Caco-2 (cell line): ENCODE measurements at regions of chr2 and their contacts with region 1.

Region 1: DNA sequence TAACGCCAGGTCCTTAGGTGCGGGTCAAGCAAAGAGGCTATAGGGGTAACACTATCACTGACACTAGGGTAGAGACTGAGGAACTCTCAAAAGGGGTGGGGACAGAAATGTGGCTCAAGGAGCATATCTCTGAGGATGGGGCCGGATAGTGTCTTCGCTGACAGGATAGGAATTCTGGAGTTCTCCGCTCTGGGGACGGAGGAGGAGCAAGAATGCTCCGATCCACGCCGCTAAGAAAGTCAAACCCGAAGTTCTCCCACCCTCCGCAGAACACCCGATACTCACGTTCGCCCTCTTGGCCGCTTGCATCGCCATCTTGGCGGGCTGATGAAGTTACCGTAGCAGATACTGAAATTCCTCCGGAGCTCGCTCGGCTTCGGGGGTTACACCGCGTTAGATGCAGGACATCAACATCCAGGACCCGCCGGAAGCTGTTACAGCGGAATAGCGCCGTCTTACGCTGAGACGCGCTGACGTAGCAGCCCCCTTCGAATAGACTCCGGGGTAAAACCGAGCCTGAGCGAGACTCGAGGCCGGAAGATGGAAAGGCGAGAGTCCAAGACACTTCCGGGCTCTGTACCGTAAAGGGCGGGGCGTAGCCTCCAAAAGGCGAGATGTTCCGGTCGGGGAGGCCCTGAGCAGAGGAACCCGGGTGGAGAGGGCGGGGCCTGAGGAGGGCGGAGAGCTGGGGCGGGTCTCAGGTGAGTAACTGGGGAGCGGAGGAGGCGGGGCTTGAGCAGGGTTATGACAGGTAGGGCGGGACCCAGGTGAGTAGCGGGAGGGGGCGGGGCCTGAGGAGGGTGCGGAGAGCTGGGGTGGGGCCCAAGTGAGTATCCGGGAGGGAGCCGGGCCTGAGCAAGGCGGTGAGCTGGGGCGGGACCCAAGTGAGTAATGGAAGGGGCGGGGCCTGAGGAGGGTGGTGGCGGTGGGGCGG is at the start of gene SF3B6:
- DNase-seq: peak; percentile 100
- H3K4me3 ChIP-seq: peak within 1 kb of the TSS; percentile 72
- H3K4me3 Mint-ChIP-seq: peak within 1 kb of the TSS; percentile 99
- H3K27ac Mint-ChIP-seq: peak within 1 kb of the TSS; percentile 96
- H3K4me1 ChIP-seq: peaks cover 17% of the 10 kb centered on the region
- H3K4me1 Mint-ChIP-seq: peaks cover 22% of the 10 kb centered on the region
- H3K27me3 ChIP-seq: no peaks in the 10 kb centered on the region
- H3K27me3 Mint-ChIP-seq: no peaks in the 10 kb centered on the region
- CTCF ChIP-seq: no peak
- total RNA-seq, gene SF3B6: 183 and 184 TPM in 2 replicates

Region 2: GRCh38 chr2:23926750-23927571 is 149.2 kb before region 1 on chr2 and contains the start of gene ATAD2B:
- CTCF ChIA-PET with region 1: interaction called, 30 read pairs
- POLR2A ChIA-PET with region 1: interaction called, 34 read pairs
- intact Hi-C with region 1: loop called (anchors 2 kb)
- DNase-seq: peak; percentile 91 to 99
- H3K4me3 ChIP-seq: peak within 1 kb of the TSS; percentile 99
- H3K4me3 Mint-ChIP-seq: peak within 1 kb of the TSS; percentile 91
- H3K27ac Mint-ChIP-seq: peak within 1 kb of the TSS; percentile 94
- H3K4me1 ChIP-seq: 0 out of 2 replicates have a peak, but pooled peaks cover 3% of the 10 kb centered on the region
- H3K4me1 Mint-ChIP-seq: peaks cover 25% of the 10 kb centered on the region
- H3K27me3 ChIP-seq: no peaks in the 10 kb centered on the region
- H3K27me3 Mint-ChIP-seq: no peaks in the 10 kb centered on the region
- CTCF ChIP-seq: peak; percentile 74 to 92
- total RNA-seq, gene ATAD2B: 28.9 and 32.1 TPM in 2 replicates

Region 3: DNA sequence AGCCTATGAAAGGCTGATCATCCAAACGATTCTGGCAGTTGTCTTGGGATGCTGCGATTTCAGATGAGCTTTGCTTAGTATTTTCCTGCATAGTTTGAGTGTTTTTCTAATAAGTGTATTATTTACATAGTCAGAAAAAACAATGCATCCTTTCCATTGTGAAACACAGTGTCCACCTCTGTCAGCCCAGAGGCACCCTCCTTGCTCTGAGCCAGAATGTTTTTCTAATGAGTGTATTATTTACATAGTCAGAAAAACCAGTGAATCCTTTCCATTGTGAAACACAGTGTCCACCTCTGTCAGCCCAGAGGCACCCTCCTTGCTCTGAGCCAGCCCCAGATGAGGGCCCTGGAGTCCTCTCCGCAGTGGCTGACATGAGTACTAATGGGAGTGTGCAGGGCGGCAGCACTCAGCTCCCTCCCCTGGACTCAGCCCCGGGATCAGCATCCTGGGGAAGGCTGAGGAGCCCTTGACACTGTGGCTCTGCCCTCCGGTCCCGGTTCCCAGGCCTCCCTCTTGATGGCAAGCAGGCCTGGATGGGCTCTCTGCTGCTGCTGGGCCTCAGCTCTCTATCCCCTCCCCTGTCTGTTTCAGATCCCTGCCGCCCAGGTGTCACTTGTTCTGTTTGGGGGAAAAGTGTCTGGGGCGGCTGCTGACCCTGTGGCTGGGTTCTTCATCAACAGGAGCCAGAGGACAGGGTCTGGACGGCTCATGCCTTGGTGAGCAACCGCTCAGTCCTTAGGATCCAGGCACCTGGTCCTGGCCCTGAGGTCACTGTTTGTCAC is 60.4 kb before region 1 on chr2:
- CTCF ChIA-PET with region 1: interaction called, 3 read pairs
- POLR2A ChIA-PET with region 1: no interaction called
- intact Hi-C with region 1: loop called (anchors 1 kb)
- DNase-seq: peak; percentile 66 to 73
- H3K4me3 ChIP-seq: no peak overlapping the region
- H3K4me3 Mint-ChIP-seq: no peak overlapping the region
- H3K27ac Mint-ChIP-seq: peak overlapping the region; percentile 74
- H3K4me1 ChIP-seq: peaks cover 22% of the 10 kb centered on the region
- H3K4me1 Mint-ChIP-seq: peaks cover 30% of the 10 kb centered on the region
- H3K27me3 ChIP-seq: no peaks in the 10 kb centered on the region
- H3K27me3 Mint-ChIP-seq: no peaks in the 10 kb centered on the region
- CTCF ChIP-seq: no peak

Region 4: GRCh38 chr2:24123195-24123921 is 47.2 kb after region 1 on chr2 and contains the starts of genes FAM228B and PFN4:
- CTCF ChIA-PET with region 1: interaction called, 4 read pairs
- POLR2A ChIA-PET with region 1: interaction called, 7 read pairs
- intact Hi-C with region 1: loop called (anchors 1 kb)
- DNase-seq: peak; percentile 89 to 92
- H3K4me3 ChIP-seq: peak within 1 kb of the TSS; percentile 97
- H3K4me3 Mint-ChIP-seq: peak within 1 kb of the TSS; percentile 82
- H3K27ac Mint-ChIP-seq: peak within 1 kb of the TSS; percentile 88
- H3K4me1 ChIP-seq: no peaks in the 10 kb centered on the region
- H3K4me1 Mint-ChIP-seq: peaks cover 18% of the 10 kb centered on the region
- H3K27me3 ChIP-seq: no peaks in the 10 kb centered on the region
- H3K27me3 Mint-ChIP-seq: no peaks in the 10 kb centered on the region
- CTCF ChIP-seq: no peak
- total RNA-seq, gene FAM228B: 6.7 and 7.9 TPM in 2 replicates
- total RNA-seq, gene PFN4: 1.3 and 1.4 TPM in 2 replicates

Region 5: DNA sequence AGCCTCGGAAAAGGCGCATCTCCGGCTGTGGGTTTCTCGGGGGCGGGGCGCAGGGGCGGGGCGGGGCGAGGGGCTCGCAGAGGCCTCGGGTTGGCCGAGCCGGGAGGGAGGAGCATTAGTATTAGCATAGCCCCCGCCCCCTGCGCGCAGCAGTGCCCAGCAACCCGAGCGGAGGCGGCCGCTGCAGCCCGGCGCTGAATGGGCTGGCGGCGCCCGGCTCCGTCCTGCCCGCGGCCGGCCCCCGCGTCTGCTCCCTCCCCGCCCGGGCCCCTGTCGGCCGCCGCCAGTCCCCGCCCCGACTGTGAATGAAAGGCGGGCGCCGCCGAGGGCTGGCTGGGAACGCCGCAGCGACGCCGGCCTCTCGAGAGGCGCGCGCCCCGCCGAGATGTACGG is 965.7 kb after region 1 on chr2 and contains the start of gene EFR3B:
- CTCF ChIA-PET with region 1: no interaction called
- POLR2A ChIA-PET with region 1: interaction called, 16 read pairs
- intact Hi-C with region 1: no loop called
- DNase-seq: peak; percentile 96 to 98
- H3K4me3 ChIP-seq: peak within 1 kb of the TSS; percentile 62
- H3K4me3 Mint-ChIP-seq: peak within 1 kb of the TSS; percentile 82
- H3K27ac Mint-ChIP-seq: peak within 1 kb of the TSS; percentile 11
- H3K4me1 ChIP-seq: peaks cover 5% of the 10 kb centered on the region; the same call in 1 of the 2 replicates
- H3K4me1 Mint-ChIP-seq: peaks cover 12% of the 10 kb centered on the region
- H3K27me3 ChIP-seq: no peaks in the 10 kb centered on the region
- H3K27me3 Mint-ChIP-seq: no peaks in the 10 kb centered on the region
- CTCF ChIP-seq: no peak
- total RNA-seq, gene EFR3B: 14.5 and 19.1 TPM in 2 replicates